ENCODE measurements at regions of chr7 and their contacts with region 1.

Region 1: GRCh38 chr7:30504347-30505173 is at the start of gene GGCT:
- DNase-seq: peak; percentile 99
- H3K4me3 ChIP-seq: peak within 1 kb of the TSS; percentile 81
- H3K27ac ChIP-seq: peak within 1 kb of the TSS; percentile 27
- H3K4me1 ChIP-seq: peaks cover 62% of the 10 kb centered on the region
- H3K27me3 ChIP-seq: no peaks in the 10 kb centered on the region
- CTCF ChIP-seq: no peak
- total RNA-seq, gene GGCT: 151 and 162 TPM in 2 replicates

Region 2: GRCh38 chr7:30173058-30173897 is 331.3 kb before region 1 on chr7:
- CTCF ChIA-PET with region 1: no interaction called
- POLR2A ChIA-PET with region 1: no interaction called
- intact Hi-C with region 1: loop called (anchors 5 kb)
- DNase-seq: peak; percentile 84 to 88
- H3K4me3 ChIP-seq: no peak overlapping the region
- H3K27ac ChIP-seq: no peak overlapping the region
- H3K4me1 ChIP-seq: peaks cover 23% of the 10 kb centered on the region
- H3K27me3 ChIP-seq: no peaks in the 10 kb centered on the region
- CTCF ChIP-seq: peak; percentile 52; the same call in 1 of the 2 replicates

Region 3: GRCh38 chr7:30459591-30460257 is 44.8 kb before region 1 on chr7:
- CTCF ChIA-PET with region 1: no interaction called
- POLR2A ChIA-PET with region 1: no interaction called
- intact Hi-C with region 1: loop called (anchors 1 kb)
- DNase-seq: peak; percentile 61 to 90
- H3K4me3 ChIP-seq: peak overlapping the region; percentile 37; the same call in 1 of the 2 replicates
- H3K27ac ChIP-seq: peak overlapping the region; percentile 81
- H3K4me1 ChIP-seq: peaks cover 36% of the 10 kb centered on the region
- H3K27me3 ChIP-seq: no peaks in the 10 kb centered on the region
- CTCF ChIP-seq: no peak

Region 4: DNA sequence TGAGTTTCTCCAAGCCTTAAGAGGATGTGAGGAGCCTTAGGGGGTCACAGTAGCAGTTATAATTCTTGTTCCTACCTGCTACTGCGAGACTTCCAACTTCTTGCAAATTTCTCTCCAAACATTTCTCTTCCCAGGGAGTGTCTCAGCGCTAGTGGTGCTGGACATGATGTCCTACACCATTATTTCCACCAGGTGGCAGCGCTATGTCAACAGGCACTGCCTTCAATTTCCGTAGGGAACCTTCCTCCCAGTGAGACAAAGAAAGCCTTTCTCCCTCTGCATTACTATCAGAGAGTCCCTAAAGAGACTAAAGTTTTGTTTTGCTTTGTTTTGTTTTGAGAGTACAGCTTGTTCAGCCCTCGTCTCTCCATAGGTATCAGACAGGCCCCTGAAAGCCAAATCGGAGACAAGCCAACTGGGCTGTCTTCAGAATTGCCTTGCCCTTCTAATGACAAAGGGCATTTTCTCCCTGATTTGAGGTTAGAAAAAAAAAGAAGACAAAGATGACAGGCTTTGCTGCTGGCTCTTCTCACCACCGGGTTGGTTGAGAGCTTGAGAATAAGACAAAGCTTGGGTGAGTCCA is 44.3 kb after region 1 on chr7:
- CTCF ChIA-PET with region 1: interaction called, 5 read pairs
- POLR2A ChIA-PET with region 1: no interaction called
- intact Hi-C with region 1: loop called (anchors 5 kb)
- DNase-seq: peak; percentile 61 to 73
- H3K4me3 ChIP-seq: no peak overlapping the region
- H3K27ac ChIP-seq: no peak overlapping the region
- H3K4me1 ChIP-seq: peaks cover 32% of the 10 kb centered on the region
- H3K27me3 ChIP-seq: no peaks in the 10 kb centered on the region
- CTCF ChIP-seq: peak; percentile 93